ENCODE measurements at regions of chr13 and their contacts with region 1.

Region 1: DNA sequence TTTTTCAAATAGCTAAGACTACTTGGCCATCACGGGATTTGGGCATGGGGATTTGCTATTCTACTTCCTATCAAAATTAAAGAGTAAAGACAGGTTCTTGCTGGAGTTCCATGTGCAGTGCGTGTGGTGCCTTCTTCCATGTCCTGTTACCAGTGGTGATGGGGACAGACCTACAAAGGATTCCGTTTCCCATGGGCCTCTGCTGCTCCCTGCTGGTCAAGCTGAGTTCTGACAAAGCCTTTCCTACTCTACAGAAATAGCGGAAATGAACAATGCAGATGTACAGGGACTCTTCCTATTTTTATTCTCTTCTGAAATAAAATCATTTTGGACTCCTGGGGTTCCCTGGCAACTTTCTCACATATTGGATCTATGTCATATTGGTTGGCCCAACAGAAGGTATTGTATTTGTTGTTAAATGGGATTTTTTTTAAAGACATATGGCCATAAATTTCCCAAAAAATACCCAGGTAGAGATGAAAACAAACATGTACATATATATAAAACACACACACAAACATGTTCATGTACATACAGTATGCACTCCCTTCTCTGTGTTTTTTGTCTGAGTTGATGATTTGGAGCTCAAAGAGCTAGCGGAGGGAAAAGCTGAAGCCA is 90.5 kb upstream of the SLC15A1 start:
- H3K4me3 Mint-ChIP-seq: no peak overlapping the region
- H3K27ac Mint-ChIP-seq: no peak overlapping the region
- H3K4me1 Mint-ChIP-seq: peaks cover 8% of the 10 kb centered on the region
- H3K27me3 Mint-ChIP-seq: peaks cover 37% of the 10 kb centered on the region

Region 2: GRCh38 chr13:97855570-97856303 is 987.2 kb before region 1 on chr13:
- intact Hi-C with region 1: loop called (anchors 2 kb)
- H3K4me3 Mint-ChIP-seq: no peak overlapping the region
- H3K27ac Mint-ChIP-seq: no peak overlapping the region
- H3K4me1 Mint-ChIP-seq: peaks cover 12% of the 10 kb centered on the region
- H3K27me3 Mint-ChIP-seq: peaks cover 8% of the 10 kb centered on the region

Region 3: GRCh38 chr13:98445340-98446233 is 397.4 kb before region 1 on chr13:
- intact Hi-C with region 1: loop called (anchors 5 kb)
- H3K4me3 Mint-ChIP-seq: no peak overlapping the region
- H3K27ac Mint-ChIP-seq: no peak overlapping the region
- H3K4me1 Mint-ChIP-seq: peaks cover 19% of the 10 kb centered on the region
- H3K27me3 Mint-ChIP-seq: no peaks in the 10 kb centered on the region